ENCODE measurements at regions of chr10 and their contacts with region 1.

Region 1: GRCh38 chr10:127906548-127907377 is at the start of gene PTPRE:
- DNase-seq: peak; percentile 89

Region 2: GRCh38 chr10:128011175-128011979 is 104.6 kb after region 1 on chr10:
- CTCF ChIA-PET with region 1: interaction called, 16 read pairs
- POLR2A ChIA-PET with region 1: no interaction called
- DNase-seq: peak; percentile 96

Region 3: GRCh38 chr10:128078136-128078969 is 171.6 kb after region 1 on chr10:
- CTCF ChIA-PET with region 1: no interaction called
- POLR2A ChIA-PET with region 1: no interaction called
- DNase-seq: peak; percentile 80